ENCODE measurements at regions of chr10 and their contacts with region 1.

Region 1: DNA sequence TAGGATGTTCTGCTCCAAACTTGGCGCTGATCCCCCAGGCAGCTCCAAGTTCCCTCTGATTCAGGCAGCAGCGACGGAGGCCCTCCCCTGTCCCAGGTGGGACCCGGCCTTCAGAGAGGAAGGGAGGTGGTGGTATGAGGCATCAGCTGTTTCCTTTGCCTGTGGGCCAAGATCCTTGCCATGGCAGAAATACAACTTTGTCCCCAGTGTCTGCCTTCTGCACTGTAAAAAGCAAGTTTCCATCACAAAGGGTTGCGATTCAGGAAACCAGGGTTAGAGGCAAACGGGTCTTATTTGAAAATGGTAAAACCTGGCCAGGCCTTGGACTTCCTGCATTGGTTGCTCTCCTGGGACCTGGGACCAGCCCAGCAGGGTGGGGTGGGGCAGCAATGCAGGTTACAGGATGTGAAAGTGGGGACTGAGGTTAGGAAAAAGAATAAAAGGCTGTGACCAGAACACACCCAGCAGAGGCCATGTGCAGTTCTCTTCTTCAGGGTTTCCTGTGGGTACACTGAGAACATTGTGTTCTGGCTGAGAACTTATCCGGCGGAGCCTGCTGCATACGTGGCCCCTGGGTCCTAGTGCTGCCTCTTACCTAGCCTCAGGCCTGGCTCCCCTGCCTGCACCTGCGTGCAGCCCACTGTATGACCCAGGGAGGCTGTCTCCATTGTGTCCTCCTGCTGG is 25.1 kb upstream of the DDIT4 start:
- DNase-seq: peak; percentile 34 to 92 (median 83)
- ATAC-seq: peak; percentile 95
- H3K4me3 ChIP-seq: peak overlapping the region; percentile 59
- H3K4me3 Mint-ChIP-seq: peak overlapping the region; percentile 80 to 98 (median 84)
- H3K27ac ChIP-seq: peak overlapping the region; percentile 68
- H3K27ac Mint-ChIP-seq: peak overlapping the region; percentile 87 to 99 (median 96)
- H3K4me1 ChIP-seq: peaks cover 62 to 89% of the 10 kb centered on the region in 2 donors
- H3K4me1 Mint-ChIP-seq: peaks cover 63 to 89% (median 83%) of the 10 kb centered on the region in 7 donors
- H3K27me3 ChIP-seq: no peaks in the 10 kb centered on the region
- H3K27me3 Mint-ChIP-seq: no peaks in the 10 kb centered on the region

Region 2: DNA sequence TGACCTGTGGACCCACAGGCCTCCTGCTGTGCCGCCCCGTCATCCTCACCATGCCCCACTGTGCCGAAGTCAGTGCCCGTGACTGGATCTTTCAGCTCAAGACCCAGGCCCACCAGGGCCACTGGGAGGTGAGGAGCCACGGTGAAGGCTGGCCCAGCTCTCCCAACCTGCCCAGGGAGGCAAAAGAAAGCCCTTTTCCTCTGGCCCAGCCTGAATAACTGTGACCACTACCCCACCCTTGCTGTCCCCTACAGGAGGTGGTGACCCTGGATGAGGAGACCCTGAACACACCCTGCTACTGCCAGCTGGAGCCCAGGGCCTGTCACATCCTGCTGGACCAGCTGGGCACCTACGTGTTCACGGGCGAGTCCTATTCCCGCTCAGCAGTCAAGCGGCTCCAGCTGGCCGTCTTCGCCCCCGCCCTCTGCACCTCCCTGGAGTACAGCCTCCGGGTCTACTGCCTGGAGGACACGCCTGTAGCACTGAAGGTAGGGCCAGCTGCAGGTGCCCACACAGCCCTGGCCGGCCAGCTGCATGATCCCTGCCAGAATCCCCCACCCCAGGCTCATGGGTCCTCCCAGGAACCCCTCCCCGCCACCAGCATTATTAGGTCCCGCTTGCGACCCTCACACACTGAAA is 955.0 kb before region 1 on chr10:
- CTCF ChIA-PET with region 1: no interaction called
- POLR2A ChIA-PET with region 1: no interaction called
- intact Hi-C with region 1: no loop called
- DNase-seq: no peak
- ATAC-seq: no peak
- H3K4me3 ChIP-seq: no peak overlapping the region
- H3K4me3 Mint-ChIP-seq: no peak overlapping the region
- H3K27ac ChIP-seq: no peak overlapping the region
- H3K27ac Mint-ChIP-seq: no peak overlapping the region
- H3K4me1 ChIP-seq: no peaks in the 10 kb centered on the region
- H3K4me1 Mint-ChIP-seq: peaks cover 0 to 1% (median 0%) of the 10 kb centered on the region in 7 donors
- H3K27me3 ChIP-seq: no peaks in the 10 kb centered on the region
- H3K27me3 Mint-ChIP-seq: peaks cover 0 to 10% (median 0%) of the 10 kb centered on the region in 5 donors

Region 3: DNA sequence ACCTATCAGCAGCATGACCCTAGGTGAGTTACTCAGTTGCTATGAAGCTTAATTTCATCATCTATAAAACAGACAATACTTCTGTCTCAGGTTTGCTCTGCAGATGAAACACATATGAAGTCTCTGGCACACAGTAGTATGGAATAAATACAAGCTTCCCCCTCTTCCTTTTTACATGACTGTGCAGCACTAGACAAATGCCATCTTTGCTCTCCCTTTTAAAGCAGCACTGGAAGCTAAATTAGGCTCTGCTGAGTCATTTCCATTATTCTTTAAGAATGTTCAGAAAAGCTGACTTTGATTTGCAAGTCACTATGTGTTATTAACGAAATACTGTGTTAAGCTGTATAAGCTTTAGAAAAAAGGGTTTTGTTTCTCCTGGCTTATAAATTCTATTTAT is 73.4 kb before region 1 on chr10:
- CTCF ChIA-PET with region 1: no interaction called
- POLR2A ChIA-PET with region 1: no interaction called
- intact Hi-C with region 1: no loop called
- DNase-seq: no peak
- ATAC-seq: no peak
- H3K4me3 ChIP-seq: no peak overlapping the region
- H3K4me3 Mint-ChIP-seq: no peak overlapping the region
- H3K27ac ChIP-seq: no peak overlapping the region
- H3K27ac Mint-ChIP-seq: no peak overlapping the region
- H3K4me1 ChIP-seq: peaks cover 0 to 5% of the 10 kb centered on the region in 2 donors
- H3K4me1 Mint-ChIP-seq: peaks cover 9 to 19% (median 14%) of the 10 kb centered on the region in 7 donors
- H3K27me3 ChIP-seq: no peaks in the 10 kb centered on the region
- H3K27me3 Mint-ChIP-seq: no peaks in the 10 kb centered on the region

Region 4: DNA sequence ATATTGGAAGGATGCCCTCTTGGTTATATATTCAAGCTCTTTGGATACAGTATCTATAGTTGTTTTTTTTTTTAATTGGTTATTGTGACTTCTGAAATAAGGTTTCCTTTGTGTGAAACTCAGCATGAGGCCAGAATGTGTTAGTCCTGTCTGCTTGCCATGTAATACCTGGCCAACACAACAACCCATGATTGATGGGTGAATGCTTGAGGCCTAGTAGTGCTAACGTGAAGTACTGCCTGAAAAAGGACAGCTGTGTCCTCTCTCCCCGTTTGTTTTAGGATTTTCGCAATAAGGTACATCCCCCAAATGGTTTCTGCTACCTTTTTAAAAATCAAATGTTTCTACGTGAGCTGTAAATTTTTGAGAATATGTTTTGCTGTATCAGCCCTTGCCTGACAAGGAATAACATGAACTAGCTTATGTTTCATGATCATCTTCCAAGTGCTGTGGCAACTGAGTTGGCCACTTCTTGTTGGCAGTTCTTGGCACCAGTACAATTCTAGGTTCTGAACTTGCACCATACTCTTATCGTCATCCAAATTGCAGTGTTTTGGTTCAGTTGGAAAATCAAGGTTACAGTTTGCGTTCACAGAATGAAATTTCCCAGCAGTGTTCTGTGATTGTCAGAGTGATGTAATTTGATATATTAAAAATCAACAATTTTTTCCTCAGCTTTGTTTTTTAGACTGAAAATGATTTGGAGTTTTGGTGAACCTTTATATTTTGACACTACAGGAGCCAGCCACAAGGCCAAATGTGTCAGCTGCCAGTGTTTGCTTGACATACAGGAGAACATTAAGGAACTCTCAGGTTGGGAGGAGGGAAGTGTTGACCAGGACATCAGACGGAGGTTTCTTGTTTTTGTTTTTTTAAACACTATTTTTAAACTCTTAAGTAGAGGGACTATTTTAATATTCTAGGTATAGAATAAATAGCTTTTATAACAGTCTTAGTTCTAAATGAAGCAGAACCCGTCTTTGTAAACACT is 19.1 kb before region 1 on chr10:
- CTCF ChIA-PET with region 1: no interaction called
- POLR2A ChIA-PET with region 1: interaction called, 21 read pairs
- intact Hi-C with region 1: loop called in 1 of 2 experiments (anchors 2 kb)
- DNase-seq: no peak
- ATAC-seq: no peak
- H3K4me3 ChIP-seq: no peak overlapping the region
- H3K4me3 Mint-ChIP-seq: peak overlapping the region in 6 of 10 donors; percentile 1 to 52 (median 44)
- H3K27ac ChIP-seq: peak overlapping the region; percentile 42
- H3K27ac Mint-ChIP-seq: peak overlapping the region; percentile 3 to 86 (median 72)
- H3K4me1 ChIP-seq: peaks cover 10 to 36% of the 10 kb centered on the region in 2 donors
- H3K4me1 Mint-ChIP-seq: peaks cover 28 to 52% (median 48%) of the 10 kb centered on the region in 7 donors
- H3K27me3 ChIP-seq: no peaks in the 10 kb centered on the region
- H3K27me3 Mint-ChIP-seq: no peaks in the 10 kb centered on the region

Region 5: GRCh38 chr10:72234560-72235095 is 14.0 kb before region 1 on chr10:
- CTCF ChIA-PET with region 1: no interaction called
- POLR2A ChIA-PET with region 1: interaction called, 21 read pairs
- intact Hi-C with region 1: loop called in 1 of 2 experiments (anchors 2 kb)
- DNase-seq: no peak
- ATAC-seq: no peak
- H3K4me3 ChIP-seq: no peak overlapping the region
- H3K4me3 Mint-ChIP-seq: no peak overlapping the region
- H3K27ac ChIP-seq: no peak overlapping the region
- H3K27ac Mint-ChIP-seq: no peak overlapping the region
- H3K4me1 ChIP-seq: peaks cover 0 to 12% of the 10 kb centered on the region in 2 donors
- H3K4me1 Mint-ChIP-seq: peaks cover 8 to 34% (median 20%) of the 10 kb centered on the region in 7 donors
- H3K27me3 ChIP-seq: no peaks in the 10 kb centered on the region
- H3K27me3 Mint-ChIP-seq: no peaks in the 10 kb centered on the region

Region 6: GRCh38 chr10:72260588-72261322 is 12.1 kb after region 1 on chr10:
- CTCF ChIA-PET with region 1: interaction called, 8 read pairs
- POLR2A ChIA-PET with region 1: interaction called, 32 read pairs
- intact Hi-C with region 1: loop called (anchors 1 kb)
- DNase-seq: peak; percentile 55 to 89 (median 63)
- ATAC-seq: peak; percentile 85
- H3K4me3 ChIP-seq: peak overlapping the region; percentile 68
- H3K4me3 Mint-ChIP-seq: peak overlapping the region; percentile 83 to 93 (median 90)
- H3K27ac ChIP-seq: peak overlapping the region; percentile 78
- H3K27ac Mint-ChIP-seq: peak overlapping the region; percentile 87 to 97 (median 94)
- H3K4me1 ChIP-seq: peaks cover 45 to 63% of the 10 kb centered on the region in 2 donors
- H3K4me1 Mint-ChIP-seq: peaks cover 32 to 83% (median 67%) of the 10 kb centered on the region in 7 donors
- H3K27me3 ChIP-seq: no peaks in the 10 kb centered on the region
- H3K27me3 Mint-ChIP-seq: no peaks in the 10 kb centered on the region

Region 7: GRCh38 chr10:72319416-72320254 is 71.0 kb after region 1 on chr10:
- CTCF ChIA-PET with region 1: interaction called, 6 read pairs
- POLR2A ChIA-PET with region 1: interaction called, 18 read pairs
- intact Hi-C with region 1: loop called (anchors 1 kb)
- DNase-seq: peak; percentile 82 to 90 (median 88)
- ATAC-seq: peak; percentile 85
- H3K4me3 ChIP-seq: peak overlapping the region; percentile 60
- H3K4me3 Mint-ChIP-seq: peak overlapping the region; percentile 69 to 89 (median 82)
- H3K27ac ChIP-seq: peak overlapping the region; percentile 94
- H3K27ac Mint-ChIP-seq: peak overlapping the region; percentile 90 to 98 (median 97)
- H3K4me1 ChIP-seq: peaks cover 61 to 90% of the 10 kb centered on the region in 2 donors
- H3K4me1 Mint-ChIP-seq: peaks cover 58 to 90% (median 83%) of the 10 kb centered on the region in 7 donors
- H3K27me3 ChIP-seq: no peaks in the 10 kb centered on the region
- H3K27me3 Mint-ChIP-seq: no peaks in the 10 kb centered on the region

Region 8: DNA sequence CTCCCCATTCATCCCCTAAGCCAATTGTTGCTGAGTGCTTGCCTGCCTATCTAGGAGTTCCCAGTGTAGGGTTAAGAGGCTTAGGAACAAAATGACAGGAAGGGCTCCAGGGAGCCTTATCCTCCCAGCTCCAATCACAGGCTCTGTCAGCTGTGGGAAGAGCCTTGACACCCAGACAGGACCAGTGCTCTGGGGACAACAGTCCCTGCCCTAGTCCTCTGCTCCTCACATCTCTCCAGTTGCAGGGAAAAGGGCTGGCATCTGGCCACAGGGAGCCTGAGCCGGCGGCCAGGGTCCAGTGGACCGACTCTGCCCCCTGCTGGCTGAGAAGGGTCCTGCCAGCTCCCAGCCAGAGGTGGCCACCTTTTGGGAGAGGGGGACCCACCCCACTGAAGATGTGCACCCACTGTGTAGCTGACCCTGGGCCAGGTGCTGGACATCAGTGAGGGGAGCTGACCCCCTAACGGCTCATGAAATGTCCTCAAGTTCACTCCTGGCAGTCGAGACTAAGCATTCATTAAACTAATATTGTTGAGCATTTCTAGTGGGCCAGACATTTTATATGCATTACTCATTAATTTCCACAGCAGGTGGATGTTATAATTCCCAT is 88.5 kb after region 1 on chr10:
- CTCF ChIA-PET with region 1: interaction called, 4 read pairs
- POLR2A ChIA-PET with region 1: interaction called, 12 read pairs
- intact Hi-C with region 1: loop called (anchors 1 kb)
- DNase-seq: peak; percentile 34 to 77 (median 56)
- ATAC-seq: peak; percentile 25
- H3K4me3 ChIP-seq: no peak overlapping the region
- H3K4me3 Mint-ChIP-seq: peak overlapping the region in 4 of 10 donors; percentile 12 to 93 (median 30)
- H3K27ac ChIP-seq: peak overlapping the region; percentile 79
- H3K27ac Mint-ChIP-seq: peak overlapping the region; percentile 29 to 99 (median 92)
- H3K4me1 ChIP-seq: peaks cover 52 to 58% of the 10 kb centered on the region in 2 donors
- H3K4me1 Mint-ChIP-seq: peaks cover 31 to 66% (median 55%) of the 10 kb centered on the region in 7 donors
- H3K27me3 ChIP-seq: no peaks in the 10 kb centered on the region
- H3K27me3 Mint-ChIP-seq: no peaks in the 10 kb centered on the region